Prostate gland (tissue), 2 donors: ENCODE measurements at regions of chr12 and their contacts with region 1.

Region 1: GRCh38 chr12:8914716-8915526 is 612 bp downstream of the PHC1 start:
- DNase-seq: peak; percentile 53
- H3K4me3 ChIP-seq: peak overlapping the region; percentile 51 to 57
- H3K27ac ChIP-seq: peak overlapping the region; percentile 78 to 92
- H3K4me1 ChIP-seq: no peaks in the 10 kb centered on the region
- H3K27me3 ChIP-seq: no peaks in the 10 kb centered on the region
- CTCF ChIP-seq: no peak
- POLR2A ChIP-seq: peak; percentile 25

Region 2: DNA sequence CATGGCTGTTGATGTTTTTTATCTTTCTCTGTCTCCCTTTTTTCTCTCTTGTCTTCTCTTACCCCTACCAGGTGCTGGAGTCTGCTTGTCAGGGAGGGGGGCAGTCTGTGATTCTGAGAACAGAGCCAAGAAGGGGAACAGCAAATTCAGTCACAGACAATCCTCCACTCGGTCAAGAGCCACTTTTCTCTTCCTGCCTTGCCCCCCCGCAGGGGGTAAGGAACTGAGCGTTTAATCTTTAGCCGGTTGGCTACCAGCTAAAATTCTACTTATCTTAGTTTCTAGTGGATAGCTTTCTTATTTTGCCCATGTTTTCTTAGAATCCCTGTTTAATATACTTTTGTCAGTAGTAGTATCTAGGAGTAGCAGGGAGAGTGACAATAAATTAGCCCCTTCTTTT is 215.2 kb before region 1 on chr12:
- intact Hi-C with region 1: loop called (anchors 5 kb)
- DNase-seq: no peak
- H3K4me3 ChIP-seq: no peak overlapping the region
- H3K27ac ChIP-seq: no peak overlapping the region
- H3K4me1 ChIP-seq: no peaks in the 10 kb centered on the region
- H3K27me3 ChIP-seq: no peaks in the 10 kb centered on the region
- CTCF ChIP-seq: no peak
- POLR2A ChIP-seq: no peak